ENCODE measurements at regions of chr1 and their contacts with region 1.

Region 1: DNA sequence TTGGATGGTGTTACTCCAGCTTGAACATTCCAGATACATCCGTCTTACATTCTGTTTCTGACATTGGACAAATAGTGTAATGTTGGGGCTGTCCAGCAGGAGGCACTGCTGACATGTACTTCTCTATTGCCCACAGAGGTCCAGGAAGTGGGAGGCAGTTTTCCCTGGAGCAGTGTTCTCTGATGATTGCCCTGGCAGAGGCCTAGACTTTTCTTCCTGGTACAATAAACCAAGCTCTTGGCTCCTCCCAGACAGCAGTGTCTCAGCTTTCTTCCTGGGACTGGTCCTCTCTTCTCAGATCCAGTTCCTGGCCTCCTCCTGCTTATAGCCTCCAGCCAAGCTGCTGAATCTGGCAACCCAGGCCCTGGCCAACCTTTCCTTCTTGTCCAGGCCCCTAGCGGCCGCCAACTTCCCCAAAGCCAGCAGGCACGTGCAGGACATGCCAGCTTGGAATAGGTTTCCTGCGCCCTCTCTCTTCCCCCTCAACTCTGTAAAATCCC is 14.9 kb upstream of the IFNLR1 start:
- DNase-seq: peak; percentile 90
- H3K4me3 ChIP-seq: no peak overlapping the region
- H3K27ac ChIP-seq: no peak overlapping the region
- H3K4me1 ChIP-seq: peaks cover 2% of the 10 kb centered on the region
- H3K27me3 ChIP-seq: no peaks in the 10 kb centered on the region
- CTCF ChIP-seq: peak; percentile 68 to 88
- POLR2A ChIP-seq: no peak

Region 2: DNA sequence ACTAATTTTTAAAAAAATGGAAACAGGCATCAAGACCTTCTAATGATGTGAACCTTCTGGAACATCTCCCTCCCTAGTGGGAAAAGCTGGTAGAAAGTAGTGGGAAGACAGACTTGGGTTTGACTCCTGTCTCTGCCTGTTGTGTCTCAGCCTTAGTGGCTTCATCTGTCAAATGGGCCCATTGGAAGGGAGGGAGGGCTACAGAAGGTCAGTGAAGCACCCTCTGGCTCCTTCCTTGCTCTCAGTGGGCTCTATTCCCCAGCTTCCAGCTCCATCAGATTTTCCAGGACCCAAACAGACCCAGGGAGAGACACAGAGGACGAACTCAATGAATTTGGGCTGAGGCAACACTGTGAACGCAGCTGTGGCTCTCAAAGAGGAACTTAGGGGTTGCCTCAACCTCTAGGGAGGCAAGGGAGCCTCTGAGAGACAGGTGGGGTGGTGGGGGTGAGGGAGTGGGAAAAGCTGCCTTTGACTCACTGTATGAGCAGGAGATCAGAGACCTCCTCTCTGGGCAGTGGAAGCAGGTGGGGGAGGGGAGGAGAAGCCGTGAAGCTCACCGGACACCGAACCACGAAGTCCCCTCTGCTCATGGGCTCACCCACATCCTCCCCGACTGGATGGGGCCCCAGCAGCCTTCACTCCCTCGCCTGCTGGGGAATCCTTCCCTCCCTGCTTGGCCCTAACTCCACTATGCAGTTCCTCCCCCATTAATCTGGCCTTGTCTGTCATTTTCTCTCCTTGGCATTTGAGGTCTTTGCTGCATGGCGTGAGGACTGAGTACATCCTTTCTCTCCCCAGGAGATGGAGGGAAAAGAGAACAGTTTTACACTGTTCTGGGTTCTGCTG is 293.3 kb before region 1 on chr1:
- CTCF ChIA-PET with region 1: no interaction called
- POLR2A ChIA-PET with region 1: no interaction called
- dilution Hi-C with region 1: no loop called
- intact Hi-C with region 1: no loop called
- DNase-seq: no peak
- H3K4me3 ChIP-seq: no peak overlapping the region
- H3K27ac ChIP-seq: no peak overlapping the region
- H3K4me1 ChIP-seq: no peaks in the 10 kb centered on the region
- H3K27me3 ChIP-seq: peaks cover 19 to 21% of the 10 kb centered on the region in 2 experiments
- CTCF ChIP-seq: no peak
- POLR2A ChIP-seq: no peak

Region 3: DNA sequence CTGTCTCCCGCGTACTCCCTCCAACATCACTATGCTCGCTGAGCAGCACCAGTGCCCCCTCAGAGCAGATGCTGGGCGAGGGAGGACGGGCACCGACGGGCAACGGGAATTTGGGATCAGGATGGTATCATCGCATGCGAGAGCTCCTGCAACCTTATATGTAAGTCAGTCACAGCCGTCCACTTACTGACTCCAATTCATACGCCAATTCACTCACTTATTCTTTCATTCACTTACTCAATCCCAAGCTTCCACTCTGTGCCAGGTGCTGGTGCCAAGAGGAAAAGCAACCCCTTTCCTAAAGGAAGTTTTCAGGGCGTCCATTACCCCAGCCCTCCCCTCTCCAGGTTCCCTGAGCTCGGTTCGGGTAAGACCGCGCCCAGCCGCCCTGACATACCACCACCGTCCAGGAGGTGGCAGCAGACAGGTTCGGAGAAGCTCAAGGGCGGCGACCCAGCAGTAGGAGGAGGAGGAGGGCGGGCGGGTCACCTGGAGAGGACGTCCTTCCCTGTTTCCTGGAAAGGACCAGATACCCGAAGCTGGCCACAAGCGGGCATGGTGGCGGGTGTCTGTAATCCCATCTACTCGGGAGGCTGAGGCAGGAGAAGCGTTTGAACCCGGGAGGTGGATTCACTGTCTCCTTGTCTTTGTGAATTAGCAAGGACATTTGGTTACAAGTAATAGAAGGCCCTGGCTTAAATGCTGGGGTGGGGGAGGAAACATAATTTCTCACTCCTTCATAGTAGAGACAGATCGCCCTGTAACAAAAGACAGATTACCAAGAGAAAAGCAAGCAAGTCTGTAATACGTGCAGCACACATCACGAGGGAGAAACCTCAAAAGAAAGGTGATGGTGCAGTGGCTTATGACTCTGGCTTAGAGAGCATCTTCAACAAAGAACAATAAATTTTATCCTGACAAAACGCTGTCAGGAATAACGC is 51.5 kb before region 1 on chr1:
- CTCF ChIA-PET with region 1: interaction called, 34 read pairs
- POLR2A ChIA-PET with region 1: no interaction called
- dilution Hi-C with region 1: no loop called
- intact Hi-C with region 1: no loop called
- DNase-seq: peak; percentile 83
- H3K4me3 ChIP-seq: peak overlapping the region in 1 of 3 experiments; percentile 19
- H3K27ac ChIP-seq: no peak overlapping the region
- H3K4me1 ChIP-seq: peaks cover 11% of the 10 kb centered on the region
- H3K27me3 ChIP-seq: peaks cover 11% of the 10 kb centered on the region in 2 experiments
- CTCF ChIP-seq: peak; percentile 79 to 94
- POLR2A ChIP-seq: no peak

Region 4: GRCh38 chr1:24301785-24302175 is 99.8 kb after region 1 on chr1:
- CTCF ChIA-PET with region 1: interaction called, 12 read pairs
- POLR2A ChIA-PET with region 1: no interaction called
- dilution Hi-C with region 1: no loop called
- intact Hi-C with region 1: no loop called
- DNase-seq: no peak
- H3K4me3 ChIP-seq: no peak overlapping the region
- H3K27ac ChIP-seq: no peak overlapping the region
- H3K4me1 ChIP-seq: no peaks in the 10 kb centered on the region
- H3K27me3 ChIP-seq: peaks cover 19 to 24% of the 10 kb centered on the region in 2 experiments
- CTCF ChIP-seq: no peak
- POLR2A ChIP-seq: no peak

Region 5: GRCh38 chr1:24344090-24344742 is 142.2 kb after region 1 on chr1:
- CTCF ChIA-PET with region 1: interaction called, 10 read pairs
- POLR2A ChIA-PET with region 1: no interaction called
- dilution Hi-C with region 1: no loop called
- intact Hi-C with region 1: no loop called
- DNase-seq: no peak
- H3K4me3 ChIP-seq: no peak overlapping the region
- H3K27ac ChIP-seq: no peak overlapping the region
- H3K4me1 ChIP-seq: no peaks in the 10 kb centered on the region
- H3K27me3 ChIP-seq: peaks cover 0 to 2% of the 10 kb centered on the region in 2 experiments
- CTCF ChIP-seq: no peak
- POLR2A ChIP-seq: no peak

Region 6: DNA sequence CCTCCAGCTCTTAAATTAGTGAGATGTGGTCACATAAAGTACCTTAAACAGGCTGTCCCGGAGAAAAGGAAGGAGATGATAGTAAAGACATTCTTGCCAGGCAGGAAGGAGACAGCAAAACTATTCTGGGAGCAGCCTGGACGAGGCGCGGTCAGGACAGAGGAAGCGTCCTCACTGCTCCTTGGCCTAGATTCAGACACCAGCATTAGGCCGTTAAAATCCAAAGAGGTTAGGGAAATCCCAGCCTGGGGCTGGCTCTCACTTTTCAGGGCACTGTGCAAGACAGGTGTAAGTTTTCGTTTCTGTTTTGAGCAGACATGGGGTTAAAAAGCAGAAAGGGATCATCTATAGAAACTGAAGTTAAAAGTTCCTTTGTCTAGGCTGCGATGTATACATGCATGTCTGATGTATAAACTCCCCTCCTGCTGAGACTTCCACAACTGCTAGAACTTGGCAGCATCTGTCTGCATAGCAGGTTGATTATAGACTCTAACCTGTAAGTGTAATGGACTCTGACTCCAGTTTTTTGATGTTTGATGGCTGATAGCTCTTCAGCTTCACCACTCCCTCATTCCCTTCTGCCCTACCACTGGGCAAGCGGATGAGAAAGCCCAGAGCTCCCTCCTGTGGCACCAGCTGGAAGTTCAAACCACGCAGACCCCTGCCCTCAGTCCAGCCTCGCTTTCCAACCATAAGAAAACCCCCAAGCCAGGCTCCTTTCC is 190.1 kb after region 1 on chr1:
- CTCF ChIA-PET with region 1: interaction called, 736 read pairs
- POLR2A ChIA-PET with region 1: interaction called, 6 read pairs
- dilution Hi-C with region 1: no loop called
- intact Hi-C with region 1: loop called (anchors 1 kb)
- DNase-seq: peak; percentile 75
- H3K4me3 ChIP-seq: peak overlapping the region in 1 of 3 experiments; percentile 32
- H3K27ac ChIP-seq: peak overlapping the region; percentile 32
- H3K4me1 ChIP-seq: peaks cover 40% of the 10 kb centered on the region
- H3K27me3 ChIP-seq: no peaks in the 10 kb centered on the region
- CTCF ChIP-seq: peak; percentile 91 to 92
- POLR2A ChIP-seq: no peak

Region 7: GRCh38 chr1:24508911-24509310 is 306.9 kb after region 1 on chr1:
- CTCF ChIA-PET with region 1: no interaction called
- POLR2A ChIA-PET with region 1: no interaction called
- dilution Hi-C with region 1: no loop called
- intact Hi-C with region 1: no loop called
- DNase-seq: no peak
- H3K4me3 ChIP-seq: no peak overlapping the region
- H3K27ac ChIP-seq: no peak overlapping the region
- H3K4me1 ChIP-seq: no peaks in the 10 kb centered on the region
- H3K27me3 ChIP-seq: peaks cover 0 to 4% of the 10 kb centered on the region in 2 experiments
- CTCF ChIP-seq: no peak
- POLR2A ChIP-seq: no peak

Region 8: DNA sequence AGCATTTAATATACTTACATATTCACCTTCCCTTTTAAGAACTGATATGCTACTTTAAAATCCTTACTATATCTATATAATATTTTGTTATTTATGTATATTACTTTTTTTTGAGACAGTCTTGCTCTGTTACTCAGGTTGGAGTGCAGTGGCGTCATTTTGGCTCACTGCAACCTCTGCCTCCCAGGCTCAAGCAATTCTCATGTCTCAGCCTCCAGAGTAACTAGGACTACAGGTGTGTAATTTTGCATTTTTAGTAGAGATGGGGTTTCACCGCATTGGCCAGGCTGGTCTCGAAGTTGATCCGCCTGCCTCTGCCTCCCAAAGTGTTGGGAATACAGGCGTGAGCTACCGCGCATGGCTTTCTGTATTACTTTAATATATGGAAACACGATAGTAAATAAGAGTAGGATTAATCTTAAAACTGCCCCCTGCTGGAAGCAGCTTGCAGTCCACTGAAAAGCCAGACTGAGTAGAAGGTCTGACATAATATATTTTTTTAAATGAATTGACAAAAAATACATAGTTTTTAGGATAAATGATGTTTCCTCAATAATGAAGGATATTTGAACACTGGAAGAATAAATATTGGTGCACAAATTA is 325.1 kb after region 1 on chr1:
- CTCF ChIA-PET with region 1: interaction called, 70 read pairs
- POLR2A ChIA-PET with region 1: no interaction called
- dilution Hi-C with region 1: no loop called
- intact Hi-C with region 1: loop called (anchors 1 kb)
- DNase-seq: peak; percentile 23
- H3K4me3 ChIP-seq: no peak overlapping the region
- H3K27ac ChIP-seq: no peak overlapping the region
- H3K4me1 ChIP-seq: no peaks in the 10 kb centered on the region
- H3K27me3 ChIP-seq: no peaks in the 10 kb centered on the region
- CTCF ChIP-seq: peak; percentile 48 to 53
- POLR2A ChIP-seq: no peak

Region 9: DNA sequence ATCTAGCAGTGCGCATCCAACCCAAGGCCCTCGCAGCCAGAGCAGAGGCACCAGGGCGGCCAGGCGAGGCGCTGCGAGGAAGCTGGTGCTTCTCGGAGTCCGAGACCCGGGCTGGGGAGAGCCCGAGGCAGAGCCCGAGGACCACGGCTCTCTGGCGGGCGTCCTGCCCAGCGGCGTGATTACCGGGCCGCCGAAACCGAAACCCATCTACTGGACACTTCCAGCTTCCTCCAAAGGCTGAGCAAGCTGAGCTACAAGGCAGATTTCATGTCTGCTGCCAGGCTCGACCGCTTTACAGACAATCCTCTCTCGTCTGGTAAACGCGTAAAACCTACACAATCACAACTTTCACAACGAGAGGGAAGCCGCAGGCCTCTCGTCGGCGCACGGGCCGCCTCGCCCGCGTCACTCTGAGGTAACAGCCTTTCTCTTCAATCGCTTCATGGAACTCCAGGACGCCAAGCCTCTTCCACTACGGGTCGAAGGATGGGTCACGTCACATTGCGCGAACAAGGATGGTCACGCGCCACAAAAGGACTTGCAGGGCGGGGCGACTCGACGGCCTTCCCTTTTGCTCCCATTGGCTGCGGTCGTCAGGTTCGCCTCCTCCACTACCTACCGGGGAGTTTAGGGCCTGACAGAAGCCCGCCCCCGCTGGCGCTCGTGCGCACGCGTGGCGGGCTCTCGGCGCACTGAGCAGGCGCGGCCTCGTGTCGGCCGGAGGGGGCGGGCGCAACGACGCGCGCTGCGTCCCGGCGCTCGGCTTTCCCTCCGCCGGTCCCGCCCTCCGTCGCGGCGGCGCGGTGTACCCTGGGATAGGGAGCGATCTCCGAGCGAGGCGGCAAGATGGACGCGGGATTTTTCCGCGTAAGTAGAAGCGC is 440.7 kb after region 1 on chr1 and contains the start of gene SRRM1:
- CTCF ChIA-PET with region 1: interaction called, 128 read pairs
- POLR2A ChIA-PET with region 1: no interaction called
- dilution Hi-C with region 1: no loop called
- intact Hi-C with region 1: loop called (anchors 2 kb)
- DNase-seq: peak; percentile 100
- H3K4me3 ChIP-seq: peak within 1 kb of the TSS; percentile 81 to 100 (median 81)
- H3K27ac ChIP-seq: peak within 1 kb of the TSS; percentile 84
- H3K4me1 ChIP-seq: peaks cover 18% of the 10 kb centered on the region
- H3K27me3 ChIP-seq: peaks cover 0 to under 1% of the 10 kb centered on the region in 2 experiments
- CTCF ChIP-seq: no peak
- POLR2A ChIP-seq: peak; percentile 98
- total RNA-seq, gene SRRM1: 157 and 163 TPM in 2 replicates

Measured in endothelial cell of umbilical vein (primary cell).